Activated naive CD4-positive, alpha-beta T cell treated with anti-CD3 and anti-CD28 coated beads for 36 hours (primary cell): ENCODE measurements at regions of chr7 and their contacts with region 1.

Region 1: GRCh38 chr7:3300651-3301378 is at the start of gene SDK1:
- DNase-seq: peak; percentile 89
- H3K4me3 Mint-ChIP-seq: peak within 1 kb of the TSS; percentile 72
- H3K27ac Mint-ChIP-seq: no peak within 1 kb of the TSS
- H3K4me1 Mint-ChIP-seq: peaks cover 8% of the 10 kb centered on the region
- H3K27me3 Mint-ChIP-seq: peaks cover 17% of the 10 kb centered on the region
- total RNA-seq, gene SDK1: 1.3 to 2.0 TPM

Region 2: DNA sequence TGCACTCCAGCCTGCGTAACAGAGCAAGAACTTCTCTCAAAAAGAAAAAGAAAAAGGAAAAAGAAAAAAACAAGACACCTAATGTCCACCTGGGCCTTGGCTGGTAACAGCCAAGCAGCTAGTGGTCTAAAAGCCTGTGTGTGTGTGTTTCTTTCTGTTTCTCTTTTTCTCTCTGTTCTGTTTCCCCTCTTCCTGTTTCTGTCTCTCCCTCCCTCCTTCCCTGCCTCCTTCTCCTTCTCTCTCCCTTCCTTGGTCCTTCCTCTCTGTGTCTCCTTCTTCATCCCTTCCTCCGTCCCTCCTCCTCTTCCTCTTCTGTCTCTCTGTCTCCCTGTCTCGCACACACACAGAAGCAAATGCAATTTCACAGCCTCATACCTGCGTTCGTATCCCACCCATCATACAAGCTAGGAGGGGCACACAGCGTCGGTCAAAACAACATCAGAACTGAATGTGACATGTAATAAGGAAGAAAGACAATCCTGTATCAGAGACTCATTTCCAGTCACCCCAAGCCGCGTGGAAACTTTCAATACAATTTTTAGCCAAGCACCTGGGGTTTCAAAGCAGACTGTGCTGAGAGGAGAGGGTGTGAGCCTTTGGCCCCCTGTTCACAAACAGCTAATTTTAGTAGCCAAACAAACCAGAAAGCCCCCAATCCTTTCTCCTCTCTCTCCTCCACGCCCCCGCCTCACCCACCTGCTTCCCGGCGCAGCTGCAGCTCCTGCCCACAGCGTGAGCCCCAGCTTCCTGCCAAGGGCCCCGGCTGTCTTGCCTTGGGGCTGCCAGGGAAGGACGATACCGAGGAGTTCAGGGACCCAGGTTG is 406.5 kb before region 1 on chr7:
- CTCF ChIA-PET with region 1: no interaction called
- intact Hi-C with region 1: loop called (anchors 5 kb)
- DNase-seq: peak; percentile 83
- H3K4me3 Mint-ChIP-seq: peak overlapping the region; percentile 73
- H3K27ac Mint-ChIP-seq: peak overlapping the region; percentile 96
- H3K4me1 Mint-ChIP-seq: peaks cover 24% of the 10 kb centered on the region
- H3K27me3 Mint-ChIP-seq: no peaks in the 10 kb centered on the region

Region 3: GRCh38 chr7:3092468-3092867 is 208.3 kb before region 1 on chr7:
- CTCF ChIA-PET with region 1: no interaction called
- intact Hi-C with region 1: no loop called
- DNase-seq: peak; percentile 94
- H3K4me3 Mint-ChIP-seq: peak overlapping the region; percentile 59
- H3K27ac Mint-ChIP-seq: peak overlapping the region; percentile 96
- H3K4me1 Mint-ChIP-seq: peaks cover 70% of the 10 kb centered on the region
- H3K27me3 Mint-ChIP-seq: no peaks in the 10 kb centered on the region

Region 4: DNA sequence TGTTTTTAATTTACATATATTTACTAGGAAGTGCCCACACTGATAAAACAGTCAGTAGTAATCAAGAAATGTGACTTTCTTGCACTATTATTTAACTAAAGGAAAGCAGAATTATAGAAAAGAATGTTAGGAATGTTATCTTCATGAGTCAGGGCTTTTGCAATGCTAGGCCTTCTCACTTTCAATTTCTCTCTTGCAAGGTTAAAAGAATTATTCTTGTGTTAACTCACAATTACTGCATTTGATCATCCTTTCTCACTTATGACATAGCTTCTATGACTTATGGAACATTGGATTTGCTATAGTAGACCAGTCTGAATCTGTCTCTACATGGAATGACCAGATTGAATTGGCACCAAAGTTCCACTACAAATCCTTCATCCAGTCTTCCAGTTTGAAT is 192.7 kb after region 1 on chr7:
- CTCF ChIA-PET with region 1: no interaction called
- intact Hi-C with region 1: loop called (anchors 10 kb)
- DNase-seq: no peak
- H3K4me3 Mint-ChIP-seq: no peak overlapping the region
- H3K27ac Mint-ChIP-seq: no peak overlapping the region
- H3K4me1 Mint-ChIP-seq: peaks cover 29% of the 10 kb centered on the region
- H3K27me3 Mint-ChIP-seq: no peaks in the 10 kb centered on the region

Region 5: GRCh38 chr7:3673524-3673923 is 372.7 kb after region 1 on chr7:
- CTCF ChIA-PET with region 1: interaction called, 4 read pairs
- intact Hi-C with region 1: loop called (anchors 1 kb)
- DNase-seq: peak; percentile 78
- H3K4me3 Mint-ChIP-seq: no peak overlapping the region
- H3K27ac Mint-ChIP-seq: no peak overlapping the region
- H3K4me1 Mint-ChIP-seq: no peaks in the 10 kb centered on the region
- H3K27me3 Mint-ChIP-seq: no peaks in the 10 kb centered on the region

Region 6: GRCh38 chr7:4479367-4480039 is 1178.7 kb after region 1 on chr7:
- CTCF ChIA-PET with region 1: no interaction called
- intact Hi-C with region 1: loop called (anchors 5 kb)
- DNase-seq: peak; percentile 36
- H3K4me3 Mint-ChIP-seq: no peak overlapping the region
- H3K27ac Mint-ChIP-seq: no peak overlapping the region
- H3K4me1 Mint-ChIP-seq: no peaks in the 10 kb centered on the region
- H3K27me3 Mint-ChIP-seq: peaks cover 14% of the 10 kb centered on the region